Heart left ventricle (tissue), 16 donors: ENCODE measurements at regions of chr5 and their contacts with region 1.

Region 1: DNA sequence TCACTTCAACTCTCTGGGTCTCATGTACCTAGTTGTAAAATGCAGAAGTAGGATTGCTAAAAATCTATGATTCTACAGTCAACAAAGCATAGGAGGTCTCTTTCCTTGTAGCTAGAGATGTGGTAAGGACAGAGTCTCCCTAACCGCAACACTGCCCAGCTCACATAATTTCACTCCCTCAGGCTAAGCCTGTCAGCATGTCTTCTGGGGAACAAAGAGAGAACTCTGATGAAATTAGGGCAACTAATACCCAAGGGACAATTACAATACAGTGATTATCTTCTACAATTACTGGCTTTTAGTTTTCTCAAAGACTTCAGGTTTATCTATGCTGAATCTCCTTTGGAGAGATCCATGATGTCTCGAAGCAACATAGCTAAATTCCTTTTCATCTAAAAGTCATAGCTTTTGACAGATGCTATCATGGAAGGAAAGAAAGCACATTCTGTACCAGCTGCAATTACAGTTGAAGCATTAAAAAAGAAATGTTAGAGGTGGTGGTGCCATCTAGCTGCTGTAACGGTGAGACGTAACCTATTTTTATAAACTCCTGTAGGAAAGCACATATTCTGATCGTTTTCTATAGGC is 141.1 kb upstream of the TARS1 start:
- DNase-seq: no peak
- ATAC-seq: peak; percentile 52 to 87 (median 77)
- H3K4me3 ChIP-seq: no peak overlapping the region
- H3K27ac ChIP-seq: peak overlapping the region in 9 of 12 donors; percentile 13 to 72 (median 37)
- H3K4me1 ChIP-seq: peaks cover 0 to 19% (median 8%) of the 10 kb centered on the region in 12 donors
- H3K27me3 ChIP-seq: no peaks in the 10 kb centered on the region
- CTCF ChIP-seq: peak; percentile 15 to 64 (median 42)
- POLR2A ChIP-seq: no peak

Region 2: GRCh38 chr5:32613050-32613672 is 686.6 kb before region 1 on chr5:
- intact Hi-C with region 1: loop called in 2 of 10 experiments (anchors 10 kb)
- DNase-seq: peak; percentile 72 to 82 (median 80)
- ATAC-seq: peak; percentile 36 to 71 (median 68)
- H3K4me3 ChIP-seq: no peak overlapping the region
- H3K27ac ChIP-seq: no peak overlapping the region
- H3K4me1 ChIP-seq: peaks cover 0 to 26% (median 9%) of the 10 kb centered on the region in 12 donors
- H3K27me3 ChIP-seq: no peaks in the 10 kb centered on the region
- CTCF ChIP-seq: peak; percentile 82 to 96 (median 91)
- POLR2A ChIP-seq: no peak

Region 3: GRCh38 chr5:33231935-33232334 is 67.8 kb before region 1 on chr5:
- intact Hi-C with region 1: no loop called
- DNase-seq: no peak
- ATAC-seq: no peak
- H3K4me3 ChIP-seq: no peak overlapping the region
- H3K27ac ChIP-seq: no peak overlapping the region
- H3K4me1 ChIP-seq: peaks cover 0 to 23% (median 5%) of the 10 kb centered on the region in 12 donors
- H3K27me3 ChIP-seq: no peaks in the 10 kb centered on the region
- CTCF ChIP-seq: no peak
- POLR2A ChIP-seq: no peak

Region 4: GRCh38 chr5:33379757-33380156 is 80.0 kb after region 1 on chr5:
- intact Hi-C with region 1: loop called in 1 of 10 experiments (anchors 10 kb)
- DNase-seq: no peak
- ATAC-seq: peak in 3 of 4 donors; percentile 17 to 75 (median 59)
- H3K4me3 ChIP-seq: no peak overlapping the region
- H3K27ac ChIP-seq: no peak overlapping the region
- H3K4me1 ChIP-seq: peaks cover 0 to 4% (median 0%) of the 10 kb centered on the region in 12 donors
- H3K27me3 ChIP-seq: no peaks in the 10 kb centered on the region
- CTCF ChIP-seq: peak; percentile 28 to 63 (median 48)
- POLR2A ChIP-seq: no peak

Region 5: GRCh38 chr5:33479311-33479710 is 179.6 kb after region 1 on chr5:
- intact Hi-C with region 1: no loop called
- DNase-seq: no peak
- ATAC-seq: no peak
- H3K4me3 ChIP-seq: no peak overlapping the region
- H3K27ac ChIP-seq: no peak overlapping the region
- H3K4me1 ChIP-seq: no peaks in the 10 kb centered on the region
- H3K27me3 ChIP-seq: no peaks in the 10 kb centered on the region
- CTCF ChIP-seq: no peak
- POLR2A ChIP-seq: no peak